ENCODE measurements at regions of chr2 and their contacts with region 1.

Region 1: DNA sequence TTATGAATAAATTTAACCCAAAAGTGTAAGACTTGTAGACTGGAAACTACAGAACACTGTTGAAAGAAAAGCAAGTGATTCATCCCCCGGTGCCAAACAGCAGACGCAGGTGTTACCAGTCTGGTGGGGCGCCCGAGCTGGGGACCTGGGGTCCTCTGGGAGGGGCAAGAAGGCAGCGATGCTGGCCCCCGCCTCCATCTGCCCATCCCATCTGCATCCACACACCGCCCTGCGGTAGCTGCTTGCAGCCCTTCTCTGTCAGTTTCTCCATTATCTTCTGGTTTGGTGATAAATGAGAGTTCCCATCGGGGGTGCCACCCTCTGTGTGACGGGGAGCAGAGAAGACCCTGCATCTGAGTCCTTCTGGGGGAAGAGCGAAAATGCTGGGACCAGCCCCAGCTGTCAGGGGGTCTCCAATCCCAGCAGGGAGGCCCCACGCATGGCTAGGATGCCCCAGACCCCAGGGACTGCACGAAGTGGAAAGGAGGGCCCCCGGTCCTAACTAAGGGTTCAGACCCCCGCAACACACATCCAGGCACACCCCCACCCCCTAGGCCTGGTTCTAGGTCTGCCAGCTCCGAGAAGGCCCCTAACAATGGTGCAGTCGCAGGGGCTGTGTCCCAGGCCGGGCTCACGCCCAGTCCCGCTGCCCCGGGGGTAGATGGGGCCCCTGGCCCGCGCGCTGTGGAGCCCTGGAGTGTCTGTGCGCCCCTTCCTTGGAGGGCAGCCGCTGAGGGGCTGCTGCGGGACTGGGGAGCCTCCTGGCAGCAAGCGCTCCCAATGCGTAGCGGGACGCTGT is 686 bp upstream of the RGPD8 start:
- DNase-seq: peak in 3 of 5 donors; percentile 32 to 40 (median 37)
- H3K4me3 ChIP-seq: no peak overlapping the region
- H3K27ac ChIP-seq: no peak overlapping the region
- H3K4me1 ChIP-seq: no peaks in the 10 kb centered on the region
- H3K27me3 ChIP-seq: no peaks in the 10 kb centered on the region
- CTCF ChIP-seq: no peak
- EP300 ChIP-seq: no peak
- POLR2A ChIP-seq: no peak

Region 2: GRCh38 chr2:112259509-112260294 is 174.4 kb before region 1 on chr2:
- intact Hi-C with region 1: loop called in 3 of 4 experiments (anchors 5 to 10 kb)
- DNase-seq: peak; percentile 75 to 89 (median 83)
- H3K4me3 ChIP-seq: no peak overlapping the region
- H3K27ac ChIP-seq: no peak overlapping the region
- H3K4me1 ChIP-seq: peaks cover 1% of the 10 kb centered on the region
- H3K27me3 ChIP-seq: no peaks in the 10 kb centered on the region
- CTCF ChIP-seq: peak; percentile 78 to 85 (median 80)
- EP300 ChIP-seq: no peak
- POLR2A ChIP-seq: no peak

Measured in ovary (tissue), 10 donors.